AG04450 (cell line): ENCODE measurements at regions of chr9 and their contacts with region 1.

Region 1: DNA sequence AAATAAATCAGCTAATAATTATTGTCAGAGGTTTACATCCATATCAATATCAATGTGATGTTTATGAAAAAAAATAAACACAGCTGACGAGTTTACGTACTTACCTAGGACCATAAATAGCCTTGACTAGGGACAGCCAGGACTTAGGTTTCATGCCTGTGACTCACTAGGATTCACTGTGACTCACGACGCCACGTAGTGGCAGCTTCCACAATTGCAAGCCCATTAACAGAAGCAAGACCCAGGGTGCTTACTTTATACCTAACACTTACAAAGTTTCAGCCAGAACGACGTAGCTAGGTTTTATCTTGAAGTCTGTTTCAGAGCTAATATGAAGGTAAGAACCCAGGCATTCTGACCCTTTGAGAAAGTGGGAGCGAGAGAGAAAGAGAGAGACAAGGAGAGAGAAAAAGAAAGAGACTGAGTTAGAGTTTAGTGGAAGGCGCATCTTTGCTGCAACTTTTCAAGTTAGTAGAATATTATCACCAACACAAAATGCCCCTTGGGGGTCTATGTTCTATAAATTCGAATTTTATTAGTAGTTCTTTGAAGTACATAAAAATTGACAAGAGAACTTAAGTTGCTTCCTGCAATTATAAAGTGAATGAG is 191.2 kb downstream of the GNA14 start:
- DNase-seq: peak; percentile 77
- H3K4me3 ChIP-seq: no peak overlapping the region
- H3K27ac ChIP-seq: no peak overlapping the region
- H3K27me3 ChIP-seq: no peaks in the 10 kb centered on the region
- CTCF ChIP-seq: peak; percentile 93

Region 2: GRCh38 chr9:77163884-77164283 is 293.0 kb before region 1 on chr9:
- CTCF ChIA-PET with region 1: interaction called, 29 read pairs
- POLR2A ChIA-PET with region 1: no interaction called
- DNase-seq: no peak
- H3K4me3 ChIP-seq: no peak overlapping the region
- H3K27ac ChIP-seq: no peak overlapping the region
- H3K27me3 ChIP-seq: peaks cover 2% of the 10 kb centered on the region
- CTCF ChIP-seq: no peak

Region 3: GRCh38 chr9:77417566-77417965 is 39.4 kb before region 1 on chr9:
- CTCF ChIA-PET with region 1: interaction called, 18 read pairs
- POLR2A ChIA-PET with region 1: no interaction called
- DNase-seq: peak; percentile 43
- H3K4me3 ChIP-seq: no peak overlapping the region
- H3K27ac ChIP-seq: peak overlapping the region; percentile 54
- H3K27me3 ChIP-seq: no peaks in the 10 kb centered on the region
- CTCF ChIP-seq: no peak

Region 4: DNA sequence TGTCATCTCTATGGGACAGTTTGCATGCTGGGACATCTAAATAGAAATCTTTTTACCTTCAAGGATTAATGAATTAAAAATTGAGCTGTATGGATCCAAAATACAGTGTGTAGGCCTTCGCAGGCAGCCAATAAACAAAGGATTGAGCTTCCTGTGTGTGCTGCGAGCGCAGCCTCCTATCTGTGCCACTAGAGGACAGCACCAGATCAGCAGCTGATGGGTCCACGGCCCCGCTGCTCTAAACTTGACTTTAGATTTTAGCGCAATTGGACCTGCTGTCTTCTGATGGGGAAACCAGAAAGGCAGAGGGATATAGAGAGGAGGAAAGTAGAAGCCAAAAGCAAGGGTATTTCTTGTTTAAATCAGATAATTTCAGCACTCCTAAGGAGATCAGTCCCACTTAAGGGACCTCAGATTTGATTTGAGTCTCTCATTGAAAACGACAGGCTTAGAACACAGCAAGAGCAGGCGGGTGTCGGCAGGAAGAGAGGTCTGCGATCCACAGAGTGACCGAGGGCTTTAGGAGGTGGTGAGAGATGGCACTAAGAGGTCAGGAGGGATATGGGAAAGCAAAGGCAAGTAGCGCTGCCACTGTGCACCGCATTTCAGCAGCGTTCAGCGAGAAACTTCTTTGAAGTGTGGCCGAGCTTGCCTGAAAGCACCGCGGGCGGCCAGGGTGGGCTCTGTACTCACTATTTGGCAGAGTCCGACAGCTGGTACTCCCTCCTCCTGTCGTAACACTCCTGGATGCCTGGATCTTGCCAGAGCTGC is 23.1 kb before region 1 on chr9:
- CTCF ChIA-PET with region 1: interaction called, 115 read pairs
- POLR2A ChIA-PET with region 1: no interaction called
- DNase-seq: no peak
- H3K4me3 ChIP-seq: no peak overlapping the region
- H3K27ac ChIP-seq: no peak overlapping the region
- H3K27me3 ChIP-seq: no peaks in the 10 kb centered on the region
- CTCF ChIP-seq: peak; percentile 100

Region 5: DNA sequence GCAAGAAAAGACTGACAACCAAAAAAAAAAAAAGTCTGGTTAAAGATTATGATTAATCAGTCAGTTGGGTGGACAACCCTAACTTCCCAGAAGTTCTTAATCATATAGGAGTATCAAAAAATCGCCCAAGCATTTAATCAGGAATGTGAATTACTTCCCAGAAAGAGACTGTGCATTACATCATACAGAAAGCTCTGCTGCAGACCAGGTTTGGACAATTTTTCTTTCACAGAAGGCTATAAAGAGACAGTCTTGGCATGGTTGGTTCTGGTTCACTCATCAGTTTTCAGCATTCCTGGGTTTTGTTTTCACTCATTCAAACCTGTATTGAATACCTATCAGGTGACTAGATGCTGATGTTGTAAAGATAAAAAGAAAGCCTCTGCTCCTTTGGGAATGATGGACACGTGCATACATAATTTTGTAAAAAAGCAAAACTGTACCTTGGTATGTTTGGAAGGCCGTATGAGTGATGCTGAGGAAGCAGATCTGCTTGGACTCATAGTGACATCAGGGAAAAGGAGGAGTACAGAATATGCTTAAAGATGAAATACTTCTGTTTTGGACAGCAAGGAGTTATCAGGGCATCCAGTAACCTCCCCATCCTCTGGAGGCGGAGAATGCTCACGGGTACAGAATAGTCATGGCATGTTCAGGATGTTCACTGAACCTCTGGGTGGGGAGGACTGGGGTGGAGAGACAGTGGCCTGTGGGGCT is 12.7 kb after region 1 on chr9:
- CTCF ChIA-PET with region 1: interaction called, 87 read pairs
- POLR2A ChIA-PET with region 1: no interaction called
- DNase-seq: no peak
- H3K4me3 ChIP-seq: no peak overlapping the region
- H3K27ac ChIP-seq: no peak overlapping the region
- H3K27me3 ChIP-seq: no peaks in the 10 kb centered on the region
- CTCF ChIP-seq: no peak

Region 6: GRCh38 chr9:77498891-77499290 is 42.0 kb after region 1 on chr9:
- CTCF ChIA-PET with region 1: interaction called, 17 read pairs
- POLR2A ChIA-PET with region 1: no interaction called
- DNase-seq: no peak
- H3K4me3 ChIP-seq: no peak overlapping the region
- H3K27ac ChIP-seq: no peak overlapping the region
- H3K27me3 ChIP-seq: peaks cover 3% of the 10 kb centered on the region
- CTCF ChIP-seq: no peak

Region 7: GRCh38 chr9:77764894-77765780 is 308.2 kb after region 1 on chr9:
- CTCF ChIA-PET with region 1: interaction called, 24 read pairs
- POLR2A ChIA-PET with region 1: no interaction called
- DNase-seq: peak; percentile 50
- H3K4me3 ChIP-seq: no peak overlapping the region
- H3K27ac ChIP-seq: no peak overlapping the region
- H3K27me3 ChIP-seq: no peaks in the 10 kb centered on the region
- CTCF ChIP-seq: peak; percentile 73

Region 8: DNA sequence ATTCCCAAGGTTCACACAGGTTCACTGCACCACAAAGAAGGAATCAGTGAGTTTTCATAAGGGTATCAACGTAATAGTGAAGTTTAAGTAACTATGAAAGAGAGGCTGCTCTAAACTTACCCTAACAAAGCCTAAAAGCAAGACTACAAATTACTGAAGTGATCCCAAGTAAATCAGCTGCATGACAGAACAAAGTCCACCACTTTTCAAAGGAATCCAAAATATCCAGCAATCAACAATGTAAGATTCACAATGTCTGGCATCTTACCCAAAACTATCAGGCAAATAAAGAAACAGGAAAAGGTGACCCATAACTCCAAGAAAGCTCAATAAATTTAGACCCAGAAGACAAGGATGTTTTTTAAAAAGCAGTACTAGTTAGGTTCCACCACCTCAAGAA is 504.6 kb after region 1 on chr9:
- CTCF ChIA-PET with region 1: no interaction called
- POLR2A ChIA-PET with region 1: no interaction called
- DNase-seq: no peak
- H3K4me3 ChIP-seq: no peak overlapping the region
- H3K27ac ChIP-seq: no peak overlapping the region
- H3K27me3 ChIP-seq: no peaks in the 10 kb centered on the region
- CTCF ChIP-seq: no peak